B cell (primary cell): ENCODE measurements at regions of chr17 and their contacts with region 1.

Region 1: DNA sequence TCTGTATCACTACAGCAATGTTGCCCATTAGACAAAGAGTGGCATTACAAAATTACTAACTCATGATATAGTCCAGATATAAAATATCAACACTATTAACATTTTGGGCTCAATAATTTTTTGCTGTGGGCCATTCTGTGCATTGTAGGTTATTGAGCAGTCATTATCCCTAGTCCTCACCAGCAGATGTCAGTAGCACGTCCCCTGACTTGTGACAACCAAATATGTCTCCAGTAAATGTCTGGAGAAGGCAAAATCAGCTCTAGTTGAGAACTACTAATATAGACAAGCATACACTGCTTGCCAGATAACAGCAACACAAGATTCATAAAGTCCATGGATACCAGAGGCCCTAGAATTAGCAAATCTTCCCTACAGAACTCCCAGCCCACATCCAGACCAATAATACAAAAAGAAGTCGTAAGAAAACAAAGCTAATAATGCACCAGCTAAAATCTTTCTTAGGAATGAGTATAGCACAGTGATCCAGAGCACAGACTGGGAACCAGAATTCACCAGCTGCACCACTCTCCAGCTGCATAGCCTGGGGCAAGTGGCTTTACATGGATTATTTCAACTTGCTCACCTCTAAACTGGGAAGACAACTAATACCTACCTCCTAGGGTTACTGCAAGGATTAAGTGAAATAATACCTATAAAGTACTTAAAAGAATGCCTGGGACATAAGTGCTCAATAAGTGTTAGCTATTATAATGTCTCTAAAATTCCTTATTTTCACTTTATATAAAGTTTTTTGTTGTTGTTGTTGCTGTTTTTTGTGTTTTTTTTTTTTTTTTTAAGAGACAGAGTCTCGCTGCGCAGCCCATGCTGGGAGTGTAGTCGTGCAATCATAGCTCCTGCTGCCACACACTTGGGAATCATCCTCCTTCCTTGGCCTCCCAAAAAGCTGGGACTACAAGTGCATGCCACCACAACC is 23.7 kb downstream of the HELZ start:
- DNase-seq: peak; percentile 28
- ATAC-seq: no peak
- H3K4me3 ChIP-seq: no peak overlapping the region
- H3K4me3 Mint-ChIP-seq: no peak overlapping the region
- H3K27ac ChIP-seq: no peak overlapping the region
- H3K27ac Mint-ChIP-seq: no peak overlapping the region
- H3K4me1 ChIP-seq: no peaks in the 10 kb centered on the region
- H3K4me1 Mint-ChIP-seq: peaks cover 14% of the 10 kb centered on the region
- H3K27me3 ChIP-seq: no peaks in the 10 kb centered on the region
- H3K27me3 Mint-ChIP-seq: no peaks in the 10 kb centered on the region
- CTCF ChIP-seq: peak; percentile 26

Region 2: GRCh38 chr17:67293251-67294203 is 72.2 kb after region 1 on chr17:
- CTCF ChIA-PET with region 1: interaction called, 6 read pairs
- POLR2A ChIA-PET with region 1: no interaction called
- intact Hi-C with region 1: loop called (anchors 5 kb)
- DNase-seq: peak; percentile 70
- ATAC-seq: peak; percentile 81
- H3K4me3 ChIP-seq: no peak overlapping the region
- H3K4me3 Mint-ChIP-seq: peak overlapping the region; percentile 40
- H3K27ac ChIP-seq: no peak overlapping the region
- H3K27ac Mint-ChIP-seq: no peak overlapping the region
- H3K4me1 ChIP-seq: peaks cover 0 to 3% of the 10 kb centered on the region in 2 donors
- H3K4me1 Mint-ChIP-seq: peaks cover 9% of the 10 kb centered on the region
- H3K27me3 ChIP-seq: no peaks in the 10 kb centered on the region
- H3K27me3 Mint-ChIP-seq: no peaks in the 10 kb centered on the region
- CTCF ChIP-seq: peak; percentile 74